ENCODE measurements at regions of chr5 and their contacts with region 1.

Region 1: DNA sequence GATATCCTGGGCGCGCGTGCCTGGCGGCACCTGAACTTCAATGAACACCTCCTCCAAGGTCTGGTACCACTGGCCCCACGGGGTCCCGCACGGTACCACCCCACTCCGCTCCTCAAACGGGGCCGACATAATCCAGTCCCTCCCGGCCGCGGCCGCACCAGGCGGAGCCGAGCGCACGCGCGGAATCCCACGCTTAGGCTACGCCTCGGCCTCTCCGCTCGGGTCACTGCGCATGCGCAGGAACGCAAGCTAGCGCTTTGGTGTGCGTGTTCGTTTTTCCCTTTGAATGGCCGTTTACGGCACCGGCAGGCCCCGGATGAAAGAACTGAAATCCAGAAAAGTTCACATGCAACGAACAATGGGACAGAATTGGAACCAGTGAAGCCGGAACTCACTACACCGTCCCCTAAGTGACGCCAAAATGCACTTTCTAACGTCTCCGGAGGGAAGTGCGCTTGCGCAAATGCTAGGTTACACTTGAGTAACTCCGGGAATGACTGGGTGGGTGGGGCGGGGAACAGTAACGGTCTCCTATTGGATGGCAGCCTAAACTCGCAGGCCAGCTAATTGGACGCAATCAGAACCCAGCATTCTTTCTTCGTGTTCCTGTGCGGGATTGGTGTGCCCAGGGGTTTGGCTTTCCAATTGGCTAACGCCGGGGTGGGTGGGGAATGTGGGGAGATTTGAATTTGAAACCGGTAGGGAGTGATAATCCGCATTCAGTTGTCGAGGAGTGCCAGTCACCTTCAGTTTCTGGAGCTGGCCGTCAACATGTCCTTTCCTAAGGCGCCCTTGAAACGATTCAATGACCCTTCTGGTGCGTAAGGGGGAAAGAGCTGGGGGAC is at the starts of genes HMMR and NUDCD2:
- DNase-seq: peak; percentile 94
- H3K4me3 Mint-ChIP-seq: peak within 1 kb of the TSS; percentile 79
- H3K27ac Mint-ChIP-seq: peak within 1 kb of the TSS; percentile 76
- H3K4me1 Mint-ChIP-seq: peaks cover 36% of the 10 kb centered on the region
- H3K27me3 Mint-ChIP-seq: no peaks in the 10 kb centered on the region
- CTCF ChIP-seq: no peak
- total RNA-seq, gene HMMR: 52.7 and 54.3 TPM in 2 replicates
- total RNA-seq, gene NUDCD2: 36.5 and 44.9 TPM in 2 replicates

Region 2: DNA sequence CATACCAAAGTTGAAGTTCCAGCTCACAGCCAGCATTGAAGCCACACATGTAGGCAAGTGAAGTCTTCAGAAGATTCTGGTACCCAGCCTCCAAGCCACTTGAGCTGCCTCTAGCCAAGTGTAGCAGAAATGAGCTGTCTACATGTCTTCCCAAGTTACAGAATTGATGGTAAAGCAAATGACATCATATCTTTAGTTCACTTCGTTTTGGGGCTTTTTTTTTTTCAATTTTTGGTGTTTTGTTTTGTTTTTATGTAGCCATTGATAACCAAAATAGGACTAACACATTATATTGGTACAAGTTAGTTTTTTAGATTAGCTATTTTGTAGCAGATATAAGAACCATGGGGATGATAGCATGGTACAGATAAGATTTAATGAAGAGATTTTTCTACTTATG is 38.5 kb before region 1 on chr5:
- CTCF ChIA-PET with region 1: no interaction called
- intact Hi-C with region 1: loop called (anchors 1 kb)
- DNase-seq: no peak
- H3K4me3 Mint-ChIP-seq: no peak overlapping the region
- H3K27ac Mint-ChIP-seq: no peak overlapping the region
- H3K4me1 Mint-ChIP-seq: peaks cover 13% of the 10 kb centered on the region
- H3K27me3 Mint-ChIP-seq: no peaks in the 10 kb centered on the region
- CTCF ChIP-seq: no peak

Region 3: GRCh38 chr5:163437309-163438182 is 22.6 kb before region 1 on chr5 and contains the start of gene CCNG1:
- CTCF ChIA-PET with region 1: interaction called, 4 read pairs
- intact Hi-C with region 1: loop called (anchors 2 kb)
- DNase-seq: peak; percentile 96
- H3K4me3 Mint-ChIP-seq: peak within 1 kb of the TSS; percentile 88
- H3K27ac Mint-ChIP-seq: peak within 1 kb of the TSS; percentile 82
- H3K4me1 Mint-ChIP-seq: peaks cover 37% of the 10 kb centered on the region
- H3K27me3 Mint-ChIP-seq: no peaks in the 10 kb centered on the region
- CTCF ChIP-seq: no peak
- total RNA-seq, gene CCNG1: 105 and 109 TPM in 2 replicates

Region 4: GRCh38 chr5:163505368-163506094 is 45.4 kb after region 1 on chr5 and contains the start of gene MAT2B:
- CTCF ChIA-PET with region 1: interaction called, 10 read pairs
- intact Hi-C with region 1: loop called (anchors 2 kb)
- DNase-seq: peak; percentile 97
- H3K4me3 Mint-ChIP-seq: peak within 1 kb of the TSS; percentile 98
- H3K27ac Mint-ChIP-seq: peak within 1 kb of the TSS; percentile 83
- H3K4me1 Mint-ChIP-seq: peaks cover 21% of the 10 kb centered on the region
- H3K27me3 Mint-ChIP-seq: no peaks in the 10 kb centered on the region
- CTCF ChIP-seq: peak; percentile 46
- total RNA-seq, gene MAT2B: 81.6 and 85.5 TPM in 2 replicates

Region 5: DNA sequence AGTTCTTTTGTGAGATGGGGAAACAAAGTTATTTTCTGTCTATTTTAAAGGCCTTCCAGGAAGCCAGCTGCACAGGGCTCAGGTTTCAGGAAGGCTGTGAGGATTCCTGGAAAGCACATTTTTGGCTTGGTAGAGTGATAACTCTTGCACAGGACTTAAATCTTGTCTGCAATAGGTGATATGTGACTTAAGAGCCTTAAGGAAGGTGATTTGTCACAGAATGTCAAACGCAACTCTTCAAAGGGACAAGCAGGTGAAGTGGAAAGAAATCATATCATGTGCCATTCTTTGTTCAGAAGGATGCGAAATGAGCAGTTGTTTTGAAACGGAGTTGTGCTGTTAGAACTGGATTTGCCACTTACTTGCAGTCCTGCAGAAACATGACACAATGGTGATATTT is 504.5 kb after region 1 on chr5:
- CTCF ChIA-PET with region 1: no interaction called
- intact Hi-C with region 1: no loop called
- DNase-seq: no peak
- H3K4me3 Mint-ChIP-seq: no peak overlapping the region
- H3K27ac Mint-ChIP-seq: no peak overlapping the region
- H3K4me1 Mint-ChIP-seq: peaks cover 11% of the 10 kb centered on the region
- H3K27me3 Mint-ChIP-seq: no peaks in the 10 kb centered on the region
- CTCF ChIP-seq: no peak

Measured in Calu3 (cell line).